Naive thymus-derived CD4-positive, alpha-beta T cell (primary cell): ENCODE measurements at regions of chr12 and their contacts with region 1.

Region 1: GRCh38 chr12:64669270-64669842 is 59.1 kb downstream of the RASSF3 start:
- DNase-seq: peak; percentile 26 to 87 (median 84)
- ATAC-seq: peak; percentile 93
- H3K4me3 ChIP-seq: peak overlapping the region; percentile 52
- H3K4me3 Mint-ChIP-seq: peak overlapping the region; percentile 85 to 98 (median 92)
- H3K27ac ChIP-seq: peak overlapping the region; percentile 72
- H3K27ac Mint-ChIP-seq: peak overlapping the region; percentile 91 to 99 (median 97)
- H3K4me1 ChIP-seq: peaks cover 89 to 90% of the 10 kb centered on the region in 2 donors
- H3K4me1 Mint-ChIP-seq: peaks cover 65 to 98% (median 90%) of the 10 kb centered on the region in 7 donors
- H3K27me3 ChIP-seq: no peaks in the 10 kb centered on the region
- H3K27me3 Mint-ChIP-seq: no peaks in the 10 kb centered on the region

Region 2: GRCh38 chr12:64451687-64452558 is 217.4 kb before region 1 on chr12 and contains the start of gene TBK1:
- CTCF ChIA-PET with region 1: no interaction called
- POLR2A ChIA-PET with region 1: interaction called, 4 read pairs
- intact Hi-C with region 1: loop called in 1 of 2 experiments (anchors 5 kb)
- DNase-seq: peak in 8 of 9 donors; percentile 21 to 80 (median 34)
- ATAC-seq: peak; percentile 78
- H3K4me3 ChIP-seq: peak within 1 kb of the TSS; percentile 61
- H3K4me3 Mint-ChIP-seq: peak within 1 kb of the TSS; percentile 90 to 99 (median 94)
- H3K27ac ChIP-seq: peak within 1 kb of the TSS; percentile 74
- H3K27ac Mint-ChIP-seq: peak within 1 kb of the TSS; percentile 86 to 95 (median 94)
- H3K4me1 ChIP-seq: peaks cover 19 to 24% of the 10 kb centered on the region in 2 donors
- H3K4me1 Mint-ChIP-seq: peaks cover 20 to 54% (median 41%) of the 10 kb centered on the region in 7 donors
- H3K27me3 ChIP-seq: no peaks in the 10 kb centered on the region
- H3K27me3 Mint-ChIP-seq: no peaks in the 10 kb centered on the region
- total RNA-seq, gene TBK1: 9.0 to 34.0 (median 12.1) TPM

Region 3: DNA sequence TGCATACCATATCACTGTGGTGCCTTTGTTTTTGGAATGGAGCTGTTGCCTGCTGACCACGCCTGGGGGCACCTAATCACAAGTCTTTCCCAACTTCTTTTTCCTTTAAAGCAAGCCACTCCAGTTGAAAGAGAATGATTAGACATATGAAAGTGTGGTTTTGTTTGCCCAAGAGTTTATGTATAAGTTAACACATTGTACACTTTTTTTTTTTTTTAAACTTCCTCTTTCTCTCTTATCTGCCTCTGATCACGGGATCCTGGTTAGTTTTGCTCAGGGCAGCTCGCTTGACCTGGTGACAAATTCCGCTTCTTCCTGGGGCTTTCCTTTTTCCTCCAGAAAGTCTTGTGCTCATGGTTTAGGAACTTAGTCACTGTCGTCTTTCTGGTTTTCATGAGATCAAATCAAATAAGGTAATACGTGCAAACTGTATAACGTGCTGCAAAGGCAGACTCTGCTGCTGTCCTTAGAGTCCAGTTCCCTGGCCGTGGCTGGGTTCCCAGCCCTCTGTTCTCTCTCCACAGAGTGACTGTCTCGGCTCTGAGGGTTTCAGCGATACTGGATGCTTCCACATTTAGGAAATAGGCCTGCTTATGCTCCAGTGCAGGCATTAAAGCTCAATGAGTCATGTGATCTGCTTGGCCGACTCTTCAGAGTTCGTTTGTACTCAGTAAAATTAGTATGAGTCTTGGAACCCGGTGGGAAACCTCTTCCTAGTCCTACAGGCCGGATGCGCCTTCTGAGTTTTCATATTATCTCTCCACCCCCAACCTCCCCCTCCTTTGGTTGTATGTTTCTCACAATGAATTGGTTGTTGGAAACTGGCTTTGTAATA is 43.9 kb before region 1 on chr12:
- CTCF ChIA-PET with region 1: interaction called, 4 read pairs
- POLR2A ChIA-PET with region 1: interaction called, 900 read pairs
- intact Hi-C with region 1: loop called in 1 of 2 experiments (anchors 2 kb)
- DNase-seq: peak in 1 of 9 donors; percentile 40
- ATAC-seq: peak; percentile 73
- H3K4me3 ChIP-seq: peak overlapping the region; percentile 14
- H3K4me3 Mint-ChIP-seq: peak overlapping the region; percentile 78 to 93 (median 88)
- H3K27ac ChIP-seq: peak overlapping the region; percentile 66
- H3K27ac Mint-ChIP-seq: peak overlapping the region; percentile 79 to 91 (median 88)
- H3K4me1 ChIP-seq: peaks cover 45 to 54% of the 10 kb centered on the region in 2 donors
- H3K4me1 Mint-ChIP-seq: peaks cover 34 to 91% (median 77%) of the 10 kb centered on the region in 7 donors
- H3K27me3 ChIP-seq: no peaks in the 10 kb centered on the region
- H3K27me3 Mint-ChIP-seq: no peaks in the 10 kb centered on the region

Region 4: GRCh38 chr12:64679487-64679983 is 10.2 kb after region 1 on chr12:
- CTCF ChIA-PET with region 1: interaction called, 13 read pairs
- POLR2A ChIA-PET with region 1: interaction called, 751 read pairs
- intact Hi-C with region 1: loop called (anchors 1 kb)
- DNase-seq: peak in 8 of 9 donors; percentile 33 to 83 (median 81)
- ATAC-seq: peak; percentile 76
- H3K4me3 ChIP-seq: peak overlapping the region; percentile 37
- H3K4me3 Mint-ChIP-seq: peak overlapping the region; percentile 64 to 85 (median 74)
- H3K27ac ChIP-seq: peak overlapping the region; percentile 76
- H3K27ac Mint-ChIP-seq: peak overlapping the region; percentile 94 to 100 (median 97)
- H3K4me1 ChIP-seq: peaks cover 93 to 97% of the 10 kb centered on the region in 2 donors
- H3K4me1 Mint-ChIP-seq: peaks cover 60 to 99% (median 92%) of the 10 kb centered on the region in 7 donors
- H3K27me3 ChIP-seq: no peaks in the 10 kb centered on the region
- H3K27me3 Mint-ChIP-seq: no peaks in the 10 kb centered on the region

Region 5: DNA sequence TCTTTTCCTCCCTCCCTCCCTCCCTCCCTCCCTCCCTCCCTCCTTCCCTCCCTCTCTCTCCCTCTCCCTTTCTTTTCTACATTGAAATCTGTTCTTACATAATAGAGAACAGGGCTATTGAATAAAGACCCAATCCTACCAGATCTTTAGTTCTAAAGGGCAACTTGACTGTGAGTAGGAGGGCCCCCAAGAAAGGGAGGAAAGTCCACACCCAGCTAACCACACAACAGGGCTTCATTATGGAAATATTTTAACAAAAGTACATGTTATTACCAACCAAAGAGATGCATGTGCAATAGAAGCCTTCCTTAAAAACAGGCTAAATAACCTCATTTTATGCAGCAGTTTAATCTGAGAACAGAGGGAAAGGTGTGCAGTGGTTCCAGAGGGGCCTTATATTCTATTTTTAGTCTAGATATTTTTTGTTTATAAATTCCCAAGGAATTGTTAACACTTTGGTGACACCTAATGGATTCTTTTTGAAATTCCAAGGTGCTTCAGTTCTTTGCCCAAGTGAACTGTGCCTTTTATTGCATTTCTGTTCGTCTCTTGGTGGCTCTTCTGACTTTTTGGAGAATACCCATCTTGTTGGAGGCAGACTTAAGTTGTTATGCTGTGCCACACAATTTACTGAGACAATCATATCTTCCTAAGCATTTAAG is 26.9 kb after region 1 on chr12:
- CTCF ChIA-PET with region 1: interaction called, 7 read pairs
- POLR2A ChIA-PET with region 1: interaction called, 751 read pairs
- intact Hi-C with region 1: loop called (anchors 1 to 2 kb)
- DNase-seq: no peak
- ATAC-seq: no peak
- H3K4me3 ChIP-seq: no peak overlapping the region
- H3K4me3 Mint-ChIP-seq: peak overlapping the region in 8 of 10 donors; percentile 30 to 74 (median 50)
- H3K27ac ChIP-seq: peak overlapping the region; percentile 51
- H3K27ac Mint-ChIP-seq: peak overlapping the region in 8 of 9 donors; percentile 84 to 97 (median 92)
- H3K4me1 ChIP-seq: peaks cover 14 to 79% of the 10 kb centered on the region in 2 donors
- H3K4me1 Mint-ChIP-seq: peaks cover 58 to 86% (median 81%) of the 10 kb centered on the region in 7 donors
- H3K27me3 ChIP-seq: no peaks in the 10 kb centered on the region
- H3K27me3 Mint-ChIP-seq: no peaks in the 10 kb centered on the region

Region 6: DNA sequence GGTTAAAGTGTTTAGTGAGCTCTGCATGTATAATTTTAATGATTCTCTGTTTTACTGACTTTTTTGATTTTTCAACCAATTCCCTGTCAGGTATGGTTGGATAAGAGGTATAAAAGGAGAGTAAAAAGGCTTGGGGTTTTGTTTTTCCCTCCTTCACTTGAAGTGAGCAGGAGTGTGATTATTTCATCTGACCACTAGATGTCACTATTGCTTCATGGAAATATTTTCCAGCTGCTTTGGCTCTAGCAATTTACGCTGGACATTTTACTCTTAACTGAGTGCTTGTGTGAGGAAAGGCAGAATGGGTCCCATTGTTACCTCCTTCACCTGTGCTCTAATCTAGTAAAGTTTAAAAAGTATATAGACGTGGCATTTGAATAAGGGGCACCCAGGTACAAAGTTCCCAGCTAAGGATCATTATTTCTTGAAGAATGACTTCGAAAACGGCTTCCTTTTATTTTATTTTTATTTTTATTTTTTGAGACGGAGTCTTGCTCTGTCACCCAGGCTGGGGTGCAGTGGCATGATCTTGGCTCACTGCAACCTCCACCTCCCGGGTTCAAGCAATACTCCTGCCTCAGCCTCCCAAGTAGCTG is 221.6 kb after region 1 on chr12:
- CTCF ChIA-PET with region 1: no interaction called
- POLR2A ChIA-PET with region 1: no interaction called
- intact Hi-C with region 1: no loop called
- DNase-seq: peak in 7 of 9 donors; percentile 16 to 61 (median 51)
- ATAC-seq: peak; percentile 60
- H3K4me3 ChIP-seq: no peak overlapping the region
- H3K4me3 Mint-ChIP-seq: no peak overlapping the region
- H3K27ac ChIP-seq: no peak overlapping the region
- H3K27ac Mint-ChIP-seq: no peak overlapping the region
- H3K4me1 ChIP-seq: no peaks in the 10 kb centered on the region
- H3K4me1 Mint-ChIP-seq: peaks cover 0 to 2% (median 0%) of the 10 kb centered on the region in 7 donors
- H3K27me3 ChIP-seq: no peaks in the 10 kb centered on the region
- H3K27me3 Mint-ChIP-seq: peaks cover 8 to 17% (median 15%) of the 10 kb centered on the region in 5 donors